AG04449 (cell line): ENCODE measurements at regions of chr2 and their contacts with region 1.

Region 1: DNA sequence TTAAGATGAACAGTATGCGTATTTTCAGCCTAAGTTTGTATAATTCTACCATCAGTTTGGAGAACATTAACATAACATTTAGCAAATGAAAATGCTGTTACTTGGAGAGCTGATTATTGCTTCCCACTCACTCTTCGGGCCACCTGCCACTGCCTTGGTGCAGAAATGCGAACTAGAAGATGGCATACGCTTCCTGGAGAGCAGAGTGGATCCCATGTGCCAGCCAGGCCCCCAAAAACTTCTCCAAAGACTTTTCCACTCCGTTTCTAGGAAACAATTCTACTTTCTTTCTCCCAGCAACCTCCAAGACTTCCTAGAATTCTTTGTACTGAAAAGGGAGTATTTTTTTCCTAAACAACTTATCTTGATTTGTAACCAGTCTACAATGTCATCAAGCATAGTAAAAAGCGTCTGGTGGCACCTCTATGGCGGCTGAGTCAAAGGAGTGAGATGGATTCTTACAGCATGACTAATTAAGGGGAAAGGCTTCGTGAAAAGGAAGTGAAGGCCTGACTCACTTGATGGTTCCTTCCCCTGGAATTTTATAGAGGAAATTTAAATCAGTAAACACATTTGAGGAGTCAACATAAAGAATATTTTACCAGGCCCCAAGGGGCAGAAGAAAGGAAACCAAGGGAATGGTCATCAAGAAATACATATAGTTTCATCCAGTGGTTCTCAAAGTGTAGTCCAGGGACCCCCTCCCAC is 36.6 kb downstream of the FEZ2 start:
- DNase-seq: peak; percentile 67
- H3K4me3 ChIP-seq: no peak overlapping the region
- CTCF ChIP-seq: no peak

Region 2: DNA sequence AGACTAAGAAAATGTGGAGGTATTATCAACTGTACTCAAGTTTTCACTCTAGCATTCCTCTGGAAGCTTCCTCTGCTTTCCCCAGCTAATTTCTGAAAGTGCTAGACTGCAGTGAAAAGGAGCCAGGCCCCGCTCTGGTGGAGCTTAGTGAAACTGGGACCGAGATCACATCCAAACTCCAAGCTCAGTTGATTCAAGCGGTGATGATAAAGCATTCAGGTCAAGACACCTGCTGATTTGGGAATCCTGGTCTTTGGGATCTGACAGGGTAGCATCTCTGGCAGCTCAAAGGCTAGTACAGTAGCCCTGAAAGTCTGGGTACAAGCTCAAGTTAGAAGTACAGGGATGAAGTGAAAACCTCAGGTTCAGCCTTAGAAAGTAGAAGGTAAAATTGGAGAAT is 326.0 kb before region 1 on chr2:
- CTCF ChIA-PET with region 1: no interaction called
- POLR2A ChIA-PET with region 1: no interaction called
- DNase-seq: no peak
- H3K4me3 ChIP-seq: no peak overlapping the region
- CTCF ChIP-seq: no peak

Region 3: DNA sequence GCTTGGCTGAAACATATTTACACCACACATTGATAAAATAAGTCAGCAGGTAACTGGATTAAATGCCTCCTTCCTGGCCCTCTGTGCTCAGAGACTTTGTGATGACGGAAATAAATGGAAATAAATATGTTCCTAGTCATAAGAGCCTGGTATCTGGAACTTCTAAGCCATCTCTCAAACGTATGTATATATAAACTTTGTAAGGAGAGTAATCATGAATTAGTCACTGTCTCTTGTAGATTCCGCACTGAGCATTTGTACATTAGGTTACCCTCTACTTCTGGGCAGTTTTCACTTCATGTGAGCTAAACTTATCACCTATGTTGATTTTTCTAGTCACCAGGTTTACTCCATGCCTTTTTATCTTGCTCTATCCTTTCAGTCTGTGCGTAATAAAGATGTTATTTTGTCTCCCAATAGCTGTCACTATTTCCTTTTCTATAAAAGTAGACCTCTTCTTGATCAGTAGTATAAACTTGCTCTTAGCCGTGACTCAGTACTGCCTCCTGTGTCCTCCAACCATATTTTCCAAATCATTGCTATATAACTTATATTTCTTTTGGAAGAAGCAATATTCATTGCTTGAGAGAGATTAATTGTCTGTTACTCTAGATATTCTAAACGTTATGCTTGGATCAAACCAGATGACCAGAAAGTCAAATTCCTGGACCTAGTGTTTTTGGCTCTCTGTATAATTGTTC is 16.6 kb before region 1 on chr2:
- CTCF ChIA-PET with region 1: interaction called, 10 read pairs
- POLR2A ChIA-PET with region 1: interaction called, 4 read pairs
- DNase-seq: no peak
- H3K4me3 ChIP-seq: no peak overlapping the region
- CTCF ChIP-seq: peak; percentile 10

Region 4: GRCh38 chr2:36672199-36672598 is 110.8 kb after region 1 on chr2:
- CTCF ChIA-PET with region 1: interaction called, 18 read pairs
- POLR2A ChIA-PET with region 1: no interaction called
- DNase-seq: no peak
- H3K4me3 ChIP-seq: no peak overlapping the region
- CTCF ChIP-seq: peak; percentile 50